A673 (cell line): ENCODE measurements at regions of chr10 and their contacts with region 1.

Region 1: GRCh38 chr10:72692057-72692910 is at the start of gene MCU:
- DNase-seq: peak; percentile 96
- H3K4me3 ChIP-seq: peak within 1 kb of the TSS; percentile 79
- H3K27ac ChIP-seq: peak within 1 kb of the TSS; percentile 69
- H3K4me1 ChIP-seq: peaks cover 29% of the 10 kb centered on the region
- H3K27me3 ChIP-seq: no peaks in the 10 kb centered on the region
- CTCF ChIP-seq: no peak
- total RNA-seq, gene MCU: 18.7 and 20.1 TPM in 2 replicates

Region 2: DNA sequence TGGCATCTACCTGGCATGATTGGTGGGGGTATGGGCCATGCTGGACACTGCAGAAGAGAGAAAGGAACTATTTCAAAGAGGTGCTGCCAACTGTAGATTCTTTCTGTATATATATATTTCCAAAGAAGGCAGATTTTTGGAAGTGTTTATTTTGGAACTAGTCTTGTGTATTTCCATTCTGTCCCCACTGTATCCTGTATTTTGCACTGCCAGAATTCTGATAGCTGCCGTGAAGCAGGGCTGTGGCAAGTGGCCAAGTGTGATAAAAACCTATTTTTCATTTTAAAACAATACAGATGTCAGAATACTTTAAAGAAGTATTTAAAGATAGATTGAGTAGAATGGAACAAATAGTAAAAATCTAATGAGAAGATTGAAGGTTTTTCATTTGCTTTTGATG is 16.8 kb after region 1 on chr10:
- CTCF ChIA-PET with region 1: no interaction called
- POLR2A ChIA-PET with region 1: no interaction called
- intact Hi-C with region 1: no loop called
- DNase-seq: no peak
- H3K4me3 ChIP-seq: no peak overlapping the region
- H3K27ac ChIP-seq: no peak overlapping the region
- H3K4me1 ChIP-seq: peaks cover 24% of the 10 kb centered on the region
- H3K27me3 ChIP-seq: no peaks in the 10 kb centered on the region
- CTCF ChIP-seq: no peak

Region 3: GRCh38 chr10:72729528-72729927 is 37.2 kb after region 1 on chr10:
- CTCF ChIA-PET with region 1: no interaction called
- POLR2A ChIA-PET with region 1: no interaction called
- intact Hi-C with region 1: no loop called
- DNase-seq: no peak
- H3K4me3 ChIP-seq: no peak overlapping the region
- H3K27ac ChIP-seq: no peak overlapping the region
- H3K4me1 ChIP-seq: peaks cover 16% of the 10 kb centered on the region
- H3K27me3 ChIP-seq: no peaks in the 10 kb centered on the region
- CTCF ChIP-seq: no peak

Region 4: GRCh38 chr10:72834183-72834825 is 142.0 kb after region 1 on chr10:
- CTCF ChIA-PET with region 1: interaction called, 4 read pairs
- POLR2A ChIA-PET with region 1: no interaction called
- intact Hi-C with region 1: loop called (anchors 5 kb)
- DNase-seq: peak; percentile 76
- H3K4me3 ChIP-seq: no peak overlapping the region
- H3K27ac ChIP-seq: no peak overlapping the region
- H3K4me1 ChIP-seq: no peaks in the 10 kb centered on the region
- H3K27me3 ChIP-seq: no peaks in the 10 kb centered on the region
- CTCF ChIP-seq: peak; percentile 75

Region 5: DNA sequence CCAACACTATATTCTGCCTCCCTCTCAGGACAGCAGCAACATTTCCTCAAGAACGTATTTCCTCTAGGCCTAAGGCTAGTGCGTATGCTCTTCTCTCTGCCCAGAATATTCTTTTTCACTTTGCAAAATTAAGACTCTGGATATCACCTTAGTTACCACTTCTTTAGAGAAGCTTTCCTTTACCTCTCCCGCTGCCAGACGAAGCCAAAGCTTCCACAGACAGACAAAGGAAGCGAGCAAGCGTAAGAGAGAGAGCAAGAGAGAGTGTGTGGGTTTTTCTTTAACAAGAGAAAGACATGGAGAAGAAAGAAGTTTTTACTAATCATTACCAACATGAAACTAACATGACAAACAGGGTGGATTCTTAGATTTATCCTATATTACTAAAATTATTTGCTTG is 340.3 kb after region 1 on chr10:
- CTCF ChIA-PET with region 1: no interaction called
- POLR2A ChIA-PET with region 1: no interaction called
- intact Hi-C with region 1: no loop called
- DNase-seq: no peak
- H3K4me3 ChIP-seq: no peak overlapping the region
- H3K27ac ChIP-seq: no peak overlapping the region
- H3K4me1 ChIP-seq: no peaks in the 10 kb centered on the region
- H3K27me3 ChIP-seq: no peaks in the 10 kb centered on the region
- CTCF ChIP-seq: no peak

Region 6: GRCh38 chr10:73060738-73061635 is 368.7 kb after region 1 on chr10:
- CTCF ChIA-PET with region 1: interaction called, 4 read pairs
- POLR2A ChIA-PET with region 1: no interaction called
- intact Hi-C with region 1: loop called (anchors 10 kb)
- DNase-seq: peak; percentile 52
- H3K4me3 ChIP-seq: no peak overlapping the region
- H3K27ac ChIP-seq: no peak overlapping the region
- H3K4me1 ChIP-seq: no peaks in the 10 kb centered on the region
- H3K27me3 ChIP-seq: no peaks in the 10 kb centered on the region
- CTCF ChIP-seq: peak; percentile 65